Uterus (tissue), 4 donors: ENCODE measurements at regions of chr7 and their contacts with region 1.

Region 1: DNA sequence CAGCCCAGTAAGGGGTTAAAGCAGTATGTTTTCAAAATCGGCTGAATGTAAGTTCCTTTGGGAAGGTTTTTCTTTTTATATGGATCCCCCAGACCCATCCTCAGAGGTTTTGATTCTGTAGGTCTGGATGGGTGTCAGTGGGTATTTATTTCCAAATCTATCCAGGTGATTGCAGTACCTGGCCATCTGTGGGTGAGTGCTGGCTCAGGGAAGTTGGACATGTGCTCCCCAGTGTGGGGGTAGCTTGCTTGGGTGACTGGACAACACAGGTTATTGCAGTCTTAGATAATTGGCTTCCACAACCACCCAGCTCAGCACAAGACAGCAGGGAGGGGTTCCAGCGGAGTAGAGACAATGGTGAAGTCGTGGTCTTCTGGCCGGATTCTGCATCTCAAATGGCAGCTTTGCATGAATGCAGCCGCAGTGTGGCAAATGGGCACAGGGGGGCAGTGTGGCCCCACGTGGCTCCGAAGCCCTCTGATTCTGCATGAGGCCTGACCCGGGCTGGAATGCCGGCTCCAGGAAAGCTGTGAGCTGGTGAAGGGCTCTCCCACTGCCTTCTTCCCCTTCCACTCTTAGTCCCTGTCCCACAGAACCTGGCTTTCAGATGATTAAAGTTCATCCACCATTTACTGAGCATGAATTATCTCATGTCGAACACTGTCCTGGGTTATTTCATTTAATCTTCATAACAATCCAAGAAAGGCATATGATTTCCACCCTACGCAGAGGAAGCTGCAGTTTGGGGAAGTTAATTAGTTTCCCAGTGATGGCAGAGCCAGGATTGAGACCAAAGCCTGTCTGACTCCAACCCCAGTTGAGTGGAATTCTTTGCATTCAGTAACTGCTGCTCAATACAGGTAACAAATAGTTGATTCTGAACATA is 64.5 kb upstream of the SYPL1 start:
- DNase-seq: peak; percentile 77 to 84
- H3K4me3 ChIP-seq: no peak overlapping the region
- H3K27ac ChIP-seq: no peak overlapping the region
- H3K4me1 ChIP-seq: no peaks in the 10 kb centered on the region
- H3K27me3 ChIP-seq: no peaks in the 10 kb centered on the region
- CTCF ChIP-seq: peak; percentile 91 to 97 (median 94)
- POLR2A ChIP-seq: peak in 1 of 2 donors; percentile 14

Region 2: GRCh38 chr7:106236065-106236464 is 59.4 kb after region 1 on chr7:
- intact Hi-C with region 1: no loop called
- DNase-seq: no peak
- H3K4me3 ChIP-seq: no peak overlapping the region
- H3K27ac ChIP-seq: no peak overlapping the region
- H3K4me1 ChIP-seq: no peaks in the 10 kb centered on the region
- H3K27me3 ChIP-seq: no peaks in the 10 kb centered on the region
- CTCF ChIP-seq: no peak
- POLR2A ChIP-seq: no peak

Region 3: DNA sequence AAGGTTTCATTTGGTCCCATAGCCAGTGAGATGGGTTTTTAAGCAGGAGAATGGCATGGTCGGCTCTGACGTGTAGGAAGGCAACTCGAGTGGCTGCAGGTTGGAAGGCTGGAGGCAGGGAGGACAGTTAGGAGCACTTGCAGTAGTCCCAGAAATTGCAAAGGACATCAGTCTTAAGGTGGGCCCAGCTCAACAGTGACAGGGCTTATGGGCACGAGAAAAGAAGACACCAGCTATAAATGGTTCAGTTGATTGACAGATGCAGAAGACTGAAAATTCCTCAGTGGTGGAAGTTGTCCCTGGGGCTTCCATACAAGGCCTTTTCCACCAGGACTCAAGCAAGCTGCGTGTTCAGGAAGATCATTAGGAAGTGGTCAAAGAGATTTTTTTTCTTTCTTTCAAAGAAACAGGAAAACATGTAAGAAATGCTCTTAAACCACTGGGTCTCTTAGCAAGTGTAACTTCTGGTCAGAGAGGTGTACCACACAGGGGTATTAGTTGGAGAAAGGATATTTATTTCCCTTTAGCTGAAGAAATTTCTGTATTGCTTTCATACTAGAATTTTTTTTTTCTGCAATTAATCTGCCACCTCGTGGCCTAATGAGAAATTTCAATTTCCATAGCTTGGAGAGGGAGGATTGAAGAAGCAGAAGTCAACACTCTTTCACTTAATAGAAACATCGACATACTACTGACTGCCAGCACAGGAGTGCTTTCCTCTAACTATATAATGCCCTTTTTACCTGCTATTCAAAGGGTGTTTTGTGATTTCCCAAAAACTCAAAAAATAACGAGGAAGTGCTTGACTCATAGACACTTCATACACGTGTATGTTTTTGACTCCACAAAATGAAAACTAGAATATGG is 285.6 kb after region 1 on chr7:
- intact Hi-C with region 1: loop called (anchors 5 kb)
- DNase-seq: no peak
- H3K4me3 ChIP-seq: no peak overlapping the region
- H3K27ac ChIP-seq: no peak overlapping the region
- H3K4me1 ChIP-seq: no peaks in the 10 kb centered on the region
- H3K27me3 ChIP-seq: no peaks in the 10 kb centered on the region
- CTCF ChIP-seq: peak; percentile 54 to 77 (median 62)
- POLR2A ChIP-seq: no peak